Activated CD8-positive, alpha-beta T cell treated with anti-CD3 and anti-CD28 coated beads for 36 hours (primary cell): ENCODE measurements at regions of chr13 and their contacts with region 1.

Region 1: GRCh38 chr13:98570929-98571372 is 6.0 kb downstream of the STK24 start:
- DNase-seq: peak; percentile 67
- ATAC-seq: peak; percentile 66
- H3K4me3 Mint-ChIP-seq: peak overlapping the region; percentile 71
- H3K27ac Mint-ChIP-seq: peak overlapping the region; percentile 88
- H3K4me1 Mint-ChIP-seq: peaks cover 85% of the 10 kb centered on the region
- H3K27me3 Mint-ChIP-seq: no peaks in the 10 kb centered on the region
- CTCF ChIP-seq: no peak

Region 2: GRCh38 chr13:98476538-98476966 is 94.4 kb before region 1 on chr13:
- CTCF ChIA-PET with region 1: interaction called, 4 read pairs
- POLR2A ChIA-PET with region 1: interaction called, 6 read pairs
- intact Hi-C with region 1: loop called (anchors 2 kb)
- DNase-seq: peak; percentile 96
- ATAC-seq: peak; percentile 85
- H3K4me3 Mint-ChIP-seq: peak overlapping the region; percentile 56
- H3K27ac Mint-ChIP-seq: peak overlapping the region; percentile 81
- H3K4me1 Mint-ChIP-seq: peaks cover 72% of the 10 kb centered on the region
- H3K27me3 Mint-ChIP-seq: no peaks in the 10 kb centered on the region
- CTCF ChIP-seq: no peak

Region 3: DNA sequence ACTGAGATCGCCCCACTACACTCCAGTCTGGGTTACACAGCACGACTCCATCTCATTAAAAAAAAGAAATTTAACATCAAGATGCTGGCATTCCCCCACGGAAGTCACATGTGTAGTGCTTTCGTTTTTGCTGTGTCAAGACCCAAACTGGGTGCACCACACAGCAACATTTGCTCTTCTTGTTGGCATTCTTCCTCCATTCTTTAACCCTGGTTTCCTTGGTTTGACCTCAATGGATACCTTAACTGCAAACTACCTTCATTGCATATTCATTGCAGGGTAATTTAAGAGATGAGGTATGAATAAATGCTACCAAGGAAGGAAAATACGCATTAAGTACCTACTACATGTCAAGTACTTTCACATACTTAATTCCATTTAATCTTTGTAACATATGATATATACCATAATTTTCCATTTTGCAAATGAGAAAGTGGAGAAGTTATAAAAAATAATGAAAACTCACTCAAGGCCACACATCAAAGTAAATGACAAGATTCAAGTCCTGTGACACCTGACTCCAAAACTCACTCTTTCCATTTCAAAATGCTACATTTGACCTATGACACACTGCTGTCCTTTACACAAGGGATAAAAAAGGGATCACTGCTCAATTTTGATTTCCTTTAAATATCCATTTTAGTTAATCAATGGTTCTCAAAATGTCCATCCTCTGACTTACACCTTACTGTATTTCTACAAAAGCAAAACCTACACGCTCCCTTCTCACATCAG is 53.2 kb before region 1 on chr13:
- CTCF ChIA-PET with region 1: interaction called, 3 read pairs
- POLR2A ChIA-PET with region 1: interaction called, 3 read pairs
- intact Hi-C with region 1: loop called (anchors 2 kb)
- DNase-seq: peak; percentile 67
- ATAC-seq: peak; percentile 64
- H3K4me3 Mint-ChIP-seq: peak overlapping the region; percentile 28
- H3K27ac Mint-ChIP-seq: peak overlapping the region; percentile 93
- H3K4me1 Mint-ChIP-seq: peaks cover 95% of the 10 kb centered on the region
- H3K27me3 Mint-ChIP-seq: no peaks in the 10 kb centered on the region
- CTCF ChIP-seq: no peak

Region 4: DNA sequence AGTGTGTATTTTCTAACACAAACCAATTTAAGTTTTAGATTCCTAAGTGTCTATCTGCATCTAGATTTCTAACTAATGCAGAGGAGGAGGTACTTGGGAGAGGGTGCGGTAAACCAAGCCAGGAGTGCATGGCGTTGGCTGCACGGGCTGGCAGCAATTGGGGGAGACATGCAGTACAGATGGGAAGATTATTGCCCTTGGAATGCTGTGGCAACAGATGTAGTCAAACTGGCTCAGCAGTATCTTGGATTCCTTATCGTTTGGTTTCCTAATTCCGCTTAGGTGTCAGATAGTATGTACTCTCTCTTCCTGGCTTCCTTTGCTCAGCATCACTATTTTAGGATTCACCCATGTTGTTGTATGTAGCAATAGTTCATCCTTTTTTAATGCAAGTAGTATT is 35.3 kb after region 1 on chr13:
- CTCF ChIA-PET with region 1: no interaction called
- POLR2A ChIA-PET with region 1: no interaction called
- intact Hi-C with region 1: no loop called
- DNase-seq: no peak
- ATAC-seq: no peak
- H3K4me3 Mint-ChIP-seq: no peak overlapping the region
- H3K27ac Mint-ChIP-seq: no peak overlapping the region
- H3K4me1 Mint-ChIP-seq: no peaks in the 10 kb centered on the region
- H3K27me3 Mint-ChIP-seq: no peaks in the 10 kb centered on the region
- CTCF ChIP-seq: no peak